CD8-positive, alpha-beta T cell (primary cell): ENCODE measurements at regions of chr21 and their contacts with region 1.

Region 1: GRCh38 chr21:38355992-38356797 is 99.4 kb downstream of the KCNJ15 start:
- DNase-seq: peak; percentile 21 to 78 (median 59)
- ATAC-seq: peak; percentile 62
- H3K4me3 ChIP-seq: no peak overlapping the region
- H3K4me3 Mint-ChIP-seq: no peak overlapping the region
- H3K27ac ChIP-seq: no peak overlapping the region
- H3K27ac Mint-ChIP-seq: no peak overlapping the region
- H3K4me1 ChIP-seq: no peaks in the 10 kb centered on the region
- H3K4me1 Mint-ChIP-seq: no peaks in the 10 kb centered on the region
- H3K27me3 ChIP-seq: no peaks in the 10 kb centered on the region
- H3K27me3 Mint-ChIP-seq: peaks cover 12% of the 10 kb centered on the region
- CTCF ChIP-seq: peak; percentile 68

Region 2: GRCh38 chr21:37292941-37293340 is 1063.3 kb before region 1 on chr21:
- CTCF ChIA-PET with region 1: no interaction called
- POLR2A ChIA-PET with region 1: no interaction called
- intact Hi-C with region 1: no loop called
- DNase-seq: no peak
- ATAC-seq: no peak
- H3K4me3 ChIP-seq: no peak overlapping the region
- H3K4me3 Mint-ChIP-seq: no peak overlapping the region
- H3K27ac ChIP-seq: no peak overlapping the region
- H3K27ac Mint-ChIP-seq: no peak overlapping the region
- H3K4me1 ChIP-seq: no peaks in the 10 kb centered on the region
- H3K4me1 Mint-ChIP-seq: peaks cover 4% of the 10 kb centered on the region
- H3K27me3 ChIP-seq: no peaks in the 10 kb centered on the region
- H3K27me3 Mint-ChIP-seq: no peaks in the 10 kb centered on the region
- CTCF ChIP-seq: no peak

Region 3: DNA sequence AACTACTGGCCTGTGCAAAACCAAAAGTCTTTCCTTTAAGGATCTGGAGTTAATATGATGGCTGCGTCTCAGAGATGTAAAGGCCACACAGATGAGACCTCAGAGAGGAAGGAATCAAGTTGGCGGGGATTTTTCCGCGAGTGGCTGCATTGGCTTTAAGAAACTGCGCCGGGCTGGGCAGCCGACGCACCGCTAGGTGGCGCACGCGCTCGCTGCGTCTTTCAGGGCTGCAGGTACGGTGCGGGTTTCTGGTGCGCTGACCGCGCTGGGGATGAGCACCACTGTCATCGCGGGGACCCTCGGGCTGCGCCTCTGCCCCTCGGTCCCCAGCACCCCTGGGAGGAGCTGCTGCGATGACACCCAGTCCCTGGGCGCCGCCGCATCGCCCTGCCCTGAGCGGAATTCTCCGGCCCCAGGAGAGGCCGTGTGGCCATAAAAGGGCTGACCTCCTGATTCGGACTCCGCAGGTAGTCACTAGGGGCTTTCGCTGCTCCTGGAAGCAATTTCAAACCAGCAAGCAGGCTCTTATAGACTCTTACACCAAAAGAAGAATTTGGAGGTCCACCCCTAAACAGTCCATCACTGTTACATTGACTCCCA is 680.9 kb before region 1 on chr21:
- CTCF ChIA-PET with region 1: interaction called, 4 read pairs
- POLR2A ChIA-PET with region 1: no interaction called
- intact Hi-C with region 1: loop called in 1 of 2 experiments (anchors 10 kb)
- DNase-seq: peak; percentile 18 to 65 (median 48)
- ATAC-seq: no peak
- H3K4me3 ChIP-seq: no peak overlapping the region
- H3K4me3 Mint-ChIP-seq: no peak overlapping the region
- H3K27ac ChIP-seq: no peak overlapping the region
- H3K27ac Mint-ChIP-seq: no peak overlapping the region
- H3K4me1 ChIP-seq: no peaks in the 10 kb centered on the region
- H3K4me1 Mint-ChIP-seq: peaks cover 3% of the 10 kb centered on the region
- H3K27me3 ChIP-seq: no peaks in the 10 kb centered on the region
- H3K27me3 Mint-ChIP-seq: peaks cover 34% of the 10 kb centered on the region
- CTCF ChIP-seq: peak; percentile 93

Region 4: GRCh38 chr21:37711836-37712568 is 644.2 kb before region 1 on chr21:
- CTCF ChIA-PET with region 1: no interaction called
- POLR2A ChIA-PET with region 1: no interaction called
- intact Hi-C with region 1: loop called in 1 of 2 experiments (anchors 10 kb)
- DNase-seq: peak in 3 of 9 experiments; percentile 22 to 39 (median 31)
- ATAC-seq: no peak
- H3K4me3 ChIP-seq: no peak overlapping the region
- H3K4me3 Mint-ChIP-seq: no peak overlapping the region
- H3K27ac ChIP-seq: no peak overlapping the region
- H3K27ac Mint-ChIP-seq: no peak overlapping the region
- H3K4me1 ChIP-seq: no peaks in the 10 kb centered on the region
- H3K4me1 Mint-ChIP-seq: no peaks in the 10 kb centered on the region
- H3K27me3 ChIP-seq: no peaks in the 10 kb centered on the region
- H3K27me3 Mint-ChIP-seq: peaks cover 38% of the 10 kb centered on the region
- CTCF ChIP-seq: peak; percentile 25

Region 5: GRCh38 chr21:38159355-38159754 is 196.8 kb before region 1 on chr21:
- CTCF ChIA-PET with region 1: interaction called, 79 read pairs
- POLR2A ChIA-PET with region 1: no interaction called
- intact Hi-C with region 1: loop called (anchors 1 kb)
- DNase-seq: peak in 8 of 9 experiments; percentile 21 to 62 (median 46)
- ATAC-seq: no peak
- H3K4me3 ChIP-seq: no peak overlapping the region
- H3K4me3 Mint-ChIP-seq: no peak overlapping the region
- H3K27ac ChIP-seq: no peak overlapping the region
- H3K27ac Mint-ChIP-seq: no peak overlapping the region
- H3K4me1 ChIP-seq: no peaks in the 10 kb centered on the region
- H3K4me1 Mint-ChIP-seq: no peaks in the 10 kb centered on the region
- H3K27me3 ChIP-seq: no peaks in the 10 kb centered on the region
- H3K27me3 Mint-ChIP-seq: peaks cover 21% of the 10 kb centered on the region
- CTCF ChIP-seq: peak; percentile 62